ENCODE measurements at regions of chr11 and their contacts with region 1.

Region 1: GRCh38 chr11:10208131-10208575 is 85.9 kb downstream of the SBF2 start:
- DNase-seq: peak; percentile 58
- H3K4me3 Mint-ChIP-seq: no peak overlapping the region
- H3K27ac Mint-ChIP-seq: no peak overlapping the region
- H3K4me1 Mint-ChIP-seq: no peaks in the 10 kb centered on the region
- H3K27me3 Mint-ChIP-seq: no peaks in the 10 kb centered on the region
- CTCF ChIP-seq: peak; percentile 50

Region 2: GRCh38 chr11:9972989-9973388 is 235.2 kb before region 1 on chr11:
- CTCF ChIA-PET with region 1: interaction called, 4 read pairs
- POLR2A ChIA-PET with region 1: no interaction called
- intact Hi-C with region 1: loop called (anchors 10 kb)
- DNase-seq: peak; percentile 60
- H3K4me3 Mint-ChIP-seq: no peak overlapping the region
- H3K27ac Mint-ChIP-seq: peak overlapping the region; percentile 8
- H3K4me1 Mint-ChIP-seq: peaks cover 6% of the 10 kb centered on the region
- H3K27me3 Mint-ChIP-seq: no peaks in the 10 kb centered on the region
- CTCF ChIP-seq: peak; percentile 76

Region 3: DNA sequence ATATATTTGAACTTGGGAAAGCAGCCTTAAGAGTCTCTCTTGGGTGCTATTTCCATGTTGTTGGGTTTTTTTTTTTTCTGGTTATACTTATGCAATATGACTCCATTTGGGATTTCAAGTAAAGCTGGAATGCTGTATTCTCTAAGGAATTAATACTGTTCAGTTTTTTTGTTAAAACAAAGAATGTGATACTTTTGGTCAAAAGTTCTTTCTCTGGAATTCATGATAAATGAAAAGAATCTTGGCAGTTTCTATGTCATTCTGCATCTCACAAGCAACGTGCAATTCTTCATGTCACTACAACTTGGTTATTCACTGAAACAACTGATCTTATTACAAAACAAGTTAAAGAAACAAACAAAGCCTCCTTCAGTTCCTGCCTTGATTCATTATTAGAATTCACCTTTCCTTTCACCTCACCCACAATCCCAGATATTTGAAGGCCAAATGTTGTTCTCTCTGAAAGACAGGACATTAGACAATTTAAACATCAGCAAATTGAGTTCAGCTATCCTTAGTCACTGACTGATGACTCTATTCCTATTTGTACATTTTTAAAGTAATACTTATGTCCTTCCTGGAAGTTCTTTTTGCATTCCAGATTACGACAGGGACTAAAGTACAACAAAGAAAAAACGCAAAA is 90.3 kb before region 1 on chr11:
- CTCF ChIA-PET with region 1: no interaction called
- POLR2A ChIA-PET with region 1: no interaction called
- intact Hi-C with region 1: no loop called
- DNase-seq: peak; percentile 27
- H3K4me3 Mint-ChIP-seq: no peak overlapping the region
- H3K27ac Mint-ChIP-seq: peak overlapping the region; percentile 50
- H3K4me1 Mint-ChIP-seq: peaks cover 38% of the 10 kb centered on the region
- H3K27me3 Mint-ChIP-seq: no peaks in the 10 kb centered on the region
- CTCF ChIP-seq: no peak

Region 4: GRCh38 chr11:10197091-10197490 is 11.1 kb before region 1 on chr11:
- CTCF ChIA-PET with region 1: interaction called, 14 read pairs
- POLR2A ChIA-PET with region 1: interaction called, 4 read pairs
- intact Hi-C with region 1: no loop called
- DNase-seq: peak; percentile 22
- H3K4me3 Mint-ChIP-seq: no peak overlapping the region
- H3K27ac Mint-ChIP-seq: no peak overlapping the region
- H3K4me1 Mint-ChIP-seq: peaks cover 5% of the 10 kb centered on the region
- H3K27me3 Mint-ChIP-seq: no peaks in the 10 kb centered on the region
- CTCF ChIP-seq: no peak

Region 5: GRCh38 chr11:10221342-10221741 is 13.2 kb after region 1 on chr11:
- CTCF ChIA-PET with region 1: interaction called, 10 read pairs
- POLR2A ChIA-PET with region 1: interaction called, 4 read pairs
- intact Hi-C with region 1: no loop called
- DNase-seq: no peak
- H3K4me3 Mint-ChIP-seq: no peak overlapping the region
- H3K27ac Mint-ChIP-seq: no peak overlapping the region
- H3K4me1 Mint-ChIP-seq: no peaks in the 10 kb centered on the region
- H3K27me3 Mint-ChIP-seq: no peaks in the 10 kb centered on the region
- CTCF ChIP-seq: no peak

Region 6: GRCh38 chr11:10293423-10294289 is 85.5 kb after region 1 on chr11 and contains the start of gene SBF2:
- CTCF ChIA-PET with region 1: interaction called, 8 read pairs
- POLR2A ChIA-PET with region 1: interaction called, 15 read pairs
- intact Hi-C with region 1: no loop called
- DNase-seq: peak; percentile 84
- H3K4me3 Mint-ChIP-seq: peak within 1 kb of the TSS; percentile 72
- H3K27ac Mint-ChIP-seq: peak within 1 kb of the TSS; percentile 74
- H3K4me1 Mint-ChIP-seq: peaks cover 25% of the 10 kb centered on the region
- H3K27me3 Mint-ChIP-seq: no peaks in the 10 kb centered on the region
- CTCF ChIP-seq: no peak
- total RNA-seq, gene SBF2: 28.3 and 28.7 TPM in 2 replicates

Region 7: DNA sequence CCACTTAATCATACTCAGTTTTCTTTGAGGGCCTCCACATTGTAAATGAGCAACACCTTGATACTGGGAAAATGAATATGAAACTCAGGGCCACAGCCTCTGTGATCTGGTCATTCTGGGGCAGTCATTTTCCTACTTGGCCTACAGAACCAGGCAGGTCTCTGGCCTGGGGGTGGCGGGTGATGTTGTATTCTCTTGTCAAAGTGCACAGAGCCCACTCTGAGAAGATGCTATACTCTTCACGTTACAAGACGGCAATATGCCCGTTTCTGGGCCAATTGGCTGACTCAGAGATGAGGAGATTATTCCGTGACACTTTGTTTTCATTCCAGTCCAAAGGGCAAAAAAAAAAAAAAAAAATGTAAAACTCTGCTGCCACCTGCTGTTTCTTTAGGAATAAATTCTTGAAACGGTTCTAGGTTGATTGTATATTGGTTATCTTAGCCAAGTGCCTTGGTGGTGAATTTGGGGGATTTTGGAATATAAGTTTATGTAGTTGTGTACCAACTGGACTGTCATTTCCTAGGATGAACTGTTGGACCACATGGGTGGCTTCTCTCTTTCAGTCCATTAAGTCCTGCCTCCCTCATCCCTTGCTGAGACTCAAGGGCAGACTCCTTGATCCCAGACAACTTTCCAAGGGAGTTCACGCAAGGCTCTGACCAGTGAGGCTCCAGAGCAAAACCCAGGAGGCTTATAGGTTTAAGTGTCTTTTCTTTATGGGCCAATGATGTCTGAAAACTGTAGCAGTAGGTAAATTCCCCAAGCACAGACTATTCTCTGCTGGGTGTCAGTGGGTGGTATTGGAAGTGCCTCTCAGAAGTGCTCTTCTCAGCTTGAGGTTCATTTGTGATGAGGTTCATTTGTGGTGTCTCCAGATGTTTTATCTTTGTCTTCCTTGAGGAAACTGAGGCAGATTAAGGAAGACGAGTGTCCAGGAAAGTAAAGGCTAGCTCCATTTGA is 115.0 kb after region 1 on chr11:
- CTCF ChIA-PET with region 1: interaction called, 18 read pairs
- POLR2A ChIA-PET with region 1: no interaction called
- intact Hi-C with region 1: no loop called
- DNase-seq: peak; percentile 87
- H3K4me3 Mint-ChIP-seq: no peak overlapping the region
- H3K27ac Mint-ChIP-seq: peak overlapping the region; percentile 54
- H3K4me1 Mint-ChIP-seq: peaks cover 20% of the 10 kb centered on the region
- H3K27me3 Mint-ChIP-seq: no peaks in the 10 kb centered on the region
- CTCF ChIP-seq: peak; percentile 43

Region 8: GRCh38 chr11:10366568-10367370 is 158.6 kb after region 1 on chr11:
- CTCF ChIA-PET with region 1: interaction called, 5 read pairs
- POLR2A ChIA-PET with region 1: no interaction called
- intact Hi-C with region 1: loop called (anchors 1 kb)
- DNase-seq: peak; percentile 89
- H3K4me3 Mint-ChIP-seq: no peak overlapping the region
- H3K27ac Mint-ChIP-seq: peak overlapping the region; percentile 72
- H3K4me1 Mint-ChIP-seq: peaks cover 10% of the 10 kb centered on the region
- H3K27me3 Mint-ChIP-seq: no peaks in the 10 kb centered on the region
- CTCF ChIP-seq: peak; percentile 78

Region 9: DNA sequence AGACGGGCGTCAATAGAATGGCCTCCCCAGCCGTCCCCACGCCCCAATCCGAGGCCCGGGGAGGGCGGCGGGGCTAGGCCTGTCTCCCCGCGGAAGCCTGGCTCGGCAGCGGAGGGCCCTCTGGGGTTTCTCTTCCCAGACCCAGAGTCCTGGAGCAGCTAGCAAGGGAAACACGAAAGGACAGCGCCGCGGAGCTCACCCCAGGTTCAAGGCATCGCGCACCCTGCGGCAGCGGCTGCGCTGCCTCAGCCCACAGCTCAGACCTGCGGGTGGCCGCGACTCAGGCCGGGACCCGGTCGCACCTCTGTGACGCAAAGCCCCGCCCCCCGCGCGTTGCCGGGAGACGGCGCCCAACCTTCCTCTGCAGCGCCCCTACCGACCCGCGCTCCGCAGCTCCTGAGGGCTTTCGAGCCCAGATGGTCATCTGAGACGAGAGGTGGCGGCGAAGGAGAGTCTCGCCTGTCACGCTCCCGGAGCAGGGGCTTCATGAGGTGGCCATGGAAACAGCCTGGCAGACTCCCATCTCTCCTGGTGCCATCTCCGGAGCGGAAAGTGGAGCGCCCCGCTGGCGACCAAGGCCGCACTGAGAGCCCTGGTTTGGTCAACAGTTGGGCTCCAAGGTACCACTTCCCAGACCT is 332.9 kb after region 1 on chr11 and contains the start of gene RNF141:
- CTCF ChIA-PET with region 1: no interaction called
- POLR2A ChIA-PET with region 1: no interaction called
- intact Hi-C with region 1: no loop called
- DNase-seq: peak; percentile 93
- H3K4me3 Mint-ChIP-seq: peak within 1 kb of the TSS; percentile 81
- H3K27ac Mint-ChIP-seq: peak within 1 kb of the TSS; percentile 94
- H3K4me1 Mint-ChIP-seq: peaks cover 13% of the 10 kb centered on the region
- H3K27me3 Mint-ChIP-seq: no peaks in the 10 kb centered on the region
- CTCF ChIP-seq: peak; percentile 59
- total RNA-seq, gene RNF141: 28.4 and 41.8 TPM in 2 replicates

Measured in MCF 10A (cell line).